ENCODE measurements at regions of chr2 and their contacts with region 1.

Region 1: GRCh38 chr2:69565431-69565839 is 78.1 kb downstream of the AAK1 start:
- DNase-seq: peak; percentile 55 to 75 (median 70)
- ATAC-seq: peak; percentile 75
- H3K4me3 ChIP-seq: no peak overlapping the region
- H3K4me1 ChIP-seq: peaks cover 27% of the 10 kb centered on the region
- CTCF ChIP-seq: peak; percentile 70

Region 2: DNA sequence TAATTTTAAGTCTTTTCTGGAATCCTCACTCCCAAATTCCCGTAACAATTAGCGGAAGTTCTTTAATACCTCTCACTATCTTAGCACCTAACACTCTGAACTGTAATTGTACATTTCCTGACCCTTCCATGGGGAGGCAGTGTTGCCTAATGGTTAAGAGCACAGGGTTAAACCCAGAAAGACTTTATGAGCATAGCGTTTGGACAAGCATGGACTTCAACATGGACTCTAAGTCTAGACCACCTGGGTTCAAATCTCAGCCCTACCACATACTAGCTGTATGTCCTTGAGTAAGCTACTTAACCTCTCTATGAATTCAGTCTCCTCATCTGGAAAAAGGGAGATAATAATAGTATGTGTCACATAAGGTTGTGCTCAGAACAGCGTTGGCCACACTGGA is 539.4 kb before region 1 on chr2:
- intact Hi-C with region 1: no loop called
- DNase-seq: peak in 1 of 3 donors; percentile 74
- ATAC-seq: peak; percentile 86
- H3K4me3 ChIP-seq: no peak overlapping the region
- H3K4me1 ChIP-seq: peaks cover 4% of the 10 kb centered on the region
- CTCF ChIP-seq: peak; percentile 50

Region 3: DNA sequence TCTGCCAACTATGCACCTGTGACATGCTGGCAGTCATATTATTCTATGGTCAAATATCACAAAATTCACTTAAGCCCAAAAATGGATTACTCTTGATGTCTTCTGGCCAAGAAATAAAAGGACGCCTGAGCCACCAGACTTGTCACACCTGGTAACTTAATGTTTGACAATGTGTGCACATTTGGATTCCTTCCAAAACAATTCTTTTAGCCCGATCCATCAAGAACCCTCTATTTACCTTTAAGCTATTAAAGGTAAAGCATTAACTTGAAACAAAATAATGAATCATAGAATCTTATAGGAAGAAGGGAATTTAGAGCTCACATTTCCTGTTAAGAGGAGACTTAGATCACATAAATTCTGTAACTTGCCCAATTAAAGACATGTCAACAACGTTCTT is 81.7 kb before region 1 on chr2:
- intact Hi-C with region 1: no loop called
- DNase-seq: peak in 1 of 3 donors; percentile 48
- ATAC-seq: peak; percentile 92
- H3K4me3 ChIP-seq: no peak overlapping the region
- H3K4me1 ChIP-seq: peaks cover 11% of the 10 kb centered on the region
- CTCF ChIP-seq: no peak

Region 4: GRCh38 chr2:69643602-69644505 is 78.4 kb after region 1 on chr2 and contains the start of gene AAK1:
- intact Hi-C with region 1: loop called in 1 of 2 experiments (anchors 10 kb)
- DNase-seq: peak; percentile 94
- ATAC-seq: peak; percentile 93
- H3K4me3 ChIP-seq: peak within 1 kb of the TSS; percentile 89
- H3K4me1 ChIP-seq: peaks cover 14% of the 10 kb centered on the region
- CTCF ChIP-seq: no peak
- total RNA-seq, gene AAK1: 62.4 to 68.4 (median 66.2) TPM

Measured in mucosa of descending colon (tissue), 3 donors.